ENCODE measurements at regions of chr1 and their contacts with region 1.

Region 1: DNA sequence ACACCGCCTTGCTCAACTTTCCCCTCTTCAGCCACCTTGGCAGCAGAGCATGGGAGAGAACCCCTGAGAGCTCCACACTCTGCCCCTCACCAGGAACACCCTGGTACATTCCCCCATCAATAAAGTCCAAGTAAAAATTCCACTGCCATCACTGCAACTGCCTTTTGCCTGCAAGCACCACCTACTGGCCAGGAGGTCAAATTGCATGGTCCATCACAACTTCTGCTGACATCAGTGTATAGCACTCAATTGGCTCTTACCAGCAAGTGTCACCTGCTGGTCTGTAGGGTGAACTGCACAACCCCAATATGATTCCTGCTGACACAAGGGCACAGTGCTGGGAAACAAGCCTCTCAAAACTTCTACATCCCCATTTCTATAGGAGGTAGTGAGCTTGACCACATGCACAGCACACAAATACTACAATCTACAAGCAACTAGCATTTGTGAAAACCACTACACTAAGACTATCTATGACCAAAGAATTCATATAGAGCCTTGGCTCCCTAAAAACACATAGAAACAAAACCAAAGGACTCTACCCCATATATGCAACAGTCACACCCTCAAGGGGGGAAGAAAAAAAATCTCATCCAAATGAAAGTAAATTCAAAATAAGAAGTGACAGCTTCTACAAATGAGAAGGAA is 69.2 kb downstream of the FASLG start:
- DNase-seq: peak; percentile 69
- H3K4me3 Mint-ChIP-seq: no peak overlapping the region
- H3K27ac Mint-ChIP-seq: no peak overlapping the region
- H3K4me1 Mint-ChIP-seq: peaks cover 18% of the 10 kb centered on the region
- H3K27me3 Mint-ChIP-seq: peaks cover 4% of the 10 kb centered on the region

Region 2: GRCh38 chr1:172089768-172090510 is 638.1 kb before region 1 on chr1:
- CTCF ChIA-PET with region 1: interaction called, 3 read pairs
- POLR2A ChIA-PET with region 1: no interaction called
- intact Hi-C with region 1: loop called (anchors 5 kb)
- DNase-seq: peak; percentile 79
- H3K4me3 Mint-ChIP-seq: no peak overlapping the region
- H3K27ac Mint-ChIP-seq: no peak overlapping the region
- H3K4me1 Mint-ChIP-seq: peaks cover 2% of the 10 kb centered on the region
- H3K27me3 Mint-ChIP-seq: no peaks in the 10 kb centered on the region

Region 3: GRCh38 chr1:172449585-172450534 is 278.2 kb before region 1 on chr1:
- CTCF ChIA-PET with region 1: interaction called, 36 read pairs
- POLR2A ChIA-PET with region 1: no interaction called
- intact Hi-C with region 1: loop called (anchors 2 kb)
- DNase-seq: peak; percentile 47
- H3K4me3 Mint-ChIP-seq: peak overlapping the region; percentile 36
- H3K27ac Mint-ChIP-seq: no peak overlapping the region
- H3K4me1 Mint-ChIP-seq: peaks cover 31% of the 10 kb centered on the region
- H3K27me3 Mint-ChIP-seq: no peaks in the 10 kb centered on the region

Region 4: DNA sequence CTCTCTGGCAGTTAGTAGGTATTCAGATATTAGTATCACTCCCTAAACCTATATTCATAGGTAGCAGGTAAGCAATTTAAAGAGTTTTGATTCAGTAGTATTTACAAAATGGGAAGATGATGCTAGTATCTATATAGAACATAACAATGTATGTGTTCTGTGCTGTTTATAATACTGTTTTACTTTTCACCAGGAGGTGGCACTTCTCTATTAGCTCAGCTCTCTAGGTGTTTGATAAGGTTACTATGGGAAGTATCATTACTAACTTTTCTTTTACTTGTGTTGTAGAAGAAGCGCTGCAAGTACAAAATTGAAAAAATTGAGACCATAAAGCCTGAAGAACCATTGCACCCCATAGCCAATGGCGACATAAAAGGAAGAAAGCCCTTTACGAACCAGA is 118.6 kb before region 1 on chr1:
- CTCF ChIA-PET with region 1: interaction called, 110 read pairs
- POLR2A ChIA-PET with region 1: no interaction called
- intact Hi-C with region 1: loop called (anchors 1 kb)
- DNase-seq: no peak
- H3K4me3 Mint-ChIP-seq: no peak overlapping the region
- H3K27ac Mint-ChIP-seq: no peak overlapping the region
- H3K4me1 Mint-ChIP-seq: peaks cover 6% of the 10 kb centered on the region
- H3K27me3 Mint-ChIP-seq: no peaks in the 10 kb centered on the region